ENCODE measurements at regions of chr7 and their contacts with region 1.

Region 1: GRCh38 chr7:44986218-44987053 is 7.6 kb upstream of the MYO1G start:
- DNase-seq: peak; percentile 58 to 96
- H3K4me3 ChIP-seq: peak overlapping the region; percentile 68
- H3K27ac ChIP-seq: peak overlapping the region; percentile 89 to 90
- H3K4me1 ChIP-seq: peaks cover 6 to 12% of the 10 kb centered on the region in 2 donors
- H3K27me3 ChIP-seq: no peaks in the 10 kb centered on the region
- CTCF ChIP-seq: no peak

Region 2: DNA sequence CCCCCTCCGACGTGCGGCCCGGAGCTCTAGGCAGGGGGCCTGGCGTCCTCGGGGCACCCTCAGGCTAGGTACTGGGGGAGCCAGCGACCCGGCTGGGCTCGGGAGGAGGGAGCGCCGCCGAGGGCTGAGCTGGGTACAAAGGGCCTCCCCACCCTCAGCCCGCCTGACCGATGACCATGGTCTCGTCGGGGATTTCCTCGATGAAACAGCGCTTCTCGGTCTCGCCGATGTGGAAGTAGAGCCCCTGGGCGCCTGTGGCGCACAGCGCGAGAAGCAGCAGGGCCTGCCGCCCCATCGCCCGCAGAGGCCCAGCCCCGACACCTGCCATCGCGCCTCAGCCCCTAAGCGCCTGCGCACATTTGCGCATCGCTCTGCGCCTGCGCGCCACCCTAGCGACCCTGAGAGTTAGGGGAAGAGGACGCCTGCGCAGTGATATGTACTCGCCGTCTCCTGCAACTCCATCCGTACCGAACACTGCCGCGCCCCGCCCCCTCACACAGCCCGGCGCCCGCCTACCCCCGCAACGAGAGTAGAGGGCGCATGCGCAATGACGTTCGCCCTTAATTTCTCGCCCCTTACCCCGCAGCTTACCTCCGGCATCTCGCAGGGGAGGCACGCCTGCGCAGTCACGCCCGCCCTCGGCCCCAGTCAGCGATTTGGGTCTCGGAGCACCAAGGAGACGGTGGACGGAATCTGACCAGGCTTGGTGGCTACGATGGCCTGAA is 404.4 kb before region 1 on chr7 and contains the start of gene TMED4:
- intact Hi-C with region 1: loop called (anchors 5 kb)
- DNase-seq: peak; percentile 98 to 100
- H3K4me3 ChIP-seq: peak within 1 kb of the TSS; percentile 92 to 96
- H3K27ac ChIP-seq: peak within 1 kb of the TSS; percentile 88 to 97
- H3K4me1 ChIP-seq: peaks cover 6 to 17% of the 10 kb centered on the region in 2 donors
- H3K27me3 ChIP-seq: no peaks in the 10 kb centered on the region
- CTCF ChIP-seq: no peak
- total RNA-seq, gene TMED4: 69.1 TPM

Region 3: DNA sequence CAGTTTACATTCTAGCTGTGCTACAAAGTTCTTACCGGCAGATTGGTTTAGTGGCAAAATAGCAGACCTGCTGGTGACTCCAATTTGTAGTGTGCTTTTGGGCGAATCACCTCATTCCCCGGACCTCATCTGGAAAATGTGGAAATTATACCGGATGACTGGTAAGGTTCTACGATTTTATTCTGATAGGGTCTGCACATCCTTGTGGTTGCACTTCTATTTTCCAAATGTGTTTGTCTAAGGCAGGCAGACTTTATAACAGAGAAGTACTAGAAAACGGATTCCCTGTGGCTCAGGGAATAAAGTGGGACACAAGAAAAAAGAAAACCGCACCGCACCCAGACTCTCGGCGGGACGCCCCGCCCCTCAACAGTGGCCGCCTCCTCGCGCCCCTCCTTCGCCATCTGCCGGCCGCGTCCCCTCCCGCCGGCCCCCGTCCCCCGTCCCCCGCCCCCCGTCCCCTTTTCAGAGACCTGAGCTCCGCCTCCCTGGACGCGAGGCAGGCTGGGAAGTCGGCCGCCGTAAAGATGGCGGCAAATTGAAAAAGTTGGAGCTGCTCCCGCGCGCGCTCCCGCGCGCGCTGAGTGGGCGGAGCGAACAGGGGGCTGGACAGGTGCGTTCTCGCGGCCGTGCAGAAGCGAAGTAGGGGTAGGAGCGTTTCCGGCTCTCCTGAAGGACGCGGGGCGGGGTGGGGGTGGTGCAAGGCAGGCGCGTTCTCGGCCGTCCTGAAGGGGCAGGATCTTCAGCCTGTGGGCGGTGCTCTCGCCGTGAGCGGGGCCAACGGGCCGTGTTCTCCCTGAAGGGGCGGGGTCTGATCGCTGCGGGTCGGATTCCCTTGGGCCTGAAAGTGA is 13.0 kb after region 1 on chr7:
- intact Hi-C with region 1: loop called (anchors 1 kb)
- DNase-seq: peak; percentile 98 to 100
- H3K4me3 ChIP-seq: peak overlapping the region; percentile 87 to 96
- H3K27ac ChIP-seq: peak overlapping the region; percentile 78 to 96
- H3K4me1 ChIP-seq: peaks cover 0 to 18% of the 10 kb centered on the region in 2 donors
- H3K27me3 ChIP-seq: no peaks in the 10 kb centered on the region
- CTCF ChIP-seq: peak in 1 of 3 experiments; percentile 26

Region 4: DNA sequence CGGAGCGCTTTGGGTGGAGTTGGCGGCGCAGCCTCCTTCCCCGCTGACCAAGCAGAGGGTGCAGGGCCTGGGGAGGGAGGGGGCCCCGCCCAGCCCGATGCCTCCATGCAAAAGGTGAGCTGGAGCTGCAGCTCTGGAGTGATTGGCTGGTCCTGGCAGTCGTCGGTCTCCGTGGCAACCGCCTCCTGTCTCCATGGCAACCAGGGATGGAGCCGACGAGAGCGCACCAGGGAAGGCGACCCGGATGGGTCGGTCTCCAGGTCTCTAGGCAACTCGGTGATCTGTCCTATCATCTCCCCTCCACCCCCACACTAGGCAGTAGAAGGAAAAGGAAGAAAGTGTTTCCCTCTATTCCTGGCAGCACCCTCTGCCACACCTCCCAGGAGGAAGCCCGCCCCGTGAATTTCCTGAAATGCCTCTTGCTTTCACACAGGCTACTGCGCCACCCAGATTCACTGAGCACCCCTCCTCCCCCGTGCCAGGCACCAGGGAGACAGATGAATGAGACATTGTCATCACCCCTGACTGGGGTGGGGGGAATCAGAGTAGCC is 103.0 kb after region 1 on chr7:
- intact Hi-C with region 1: loop called (anchors 1 kb)
- DNase-seq: peak in 1 of 2 donors; percentile 83
- H3K4me3 ChIP-seq: peak overlapping the region; percentile 80 to 91
- H3K27ac ChIP-seq: peak overlapping the region; percentile 89 to 92
- H3K4me1 ChIP-seq: peaks cover 3 to 11% of the 10 kb centered on the region in 2 donors
- H3K27me3 ChIP-seq: no peaks in the 10 kb centered on the region
- CTCF ChIP-seq: no peak

Measured in ascending aorta (tissue), 2 donors.